CD8-positive, alpha-beta memory T cell (primary cell): ENCODE measurements at regions of chr4 and their contacts with region 1.

Region 1: GRCh38 chr4:1693129-1693896 is 9.2 kb upstream of the FAM53A start:
- DNase-seq: peak; percentile 63 to 86 (median 74)
- H3K4me3 ChIP-seq: no peak overlapping the region
- H3K4me3 Mint-ChIP-seq: no peak overlapping the region
- H3K27ac ChIP-seq: no peak overlapping the region
- H3K27ac Mint-ChIP-seq: peak overlapping the region in 6 of 8 donors; percentile 51 to 87 (median 78)
- H3K4me1 ChIP-seq: no peaks in the 10 kb centered on the region
- H3K4me1 Mint-ChIP-seq: peaks cover 0 to 5% (median 3%) of the 10 kb centered on the region in 3 donors
- H3K27me3 ChIP-seq: no peaks in the 10 kb centered on the region
- H3K27me3 Mint-ChIP-seq: no peaks in the 10 kb centered on the region

Region 2: GRCh38 chr4:1706358-1706757 is 13.0 kb after region 1 on chr4:
- CTCF ChIA-PET with region 1: interaction called, 92 read pairs
- POLR2A ChIA-PET with region 1: no interaction called
- DNase-seq: peak in 1 of 5 donors; percentile 29
- H3K4me3 ChIP-seq: no peak overlapping the region
- H3K4me3 Mint-ChIP-seq: no peak overlapping the region
- H3K27ac ChIP-seq: no peak overlapping the region
- H3K27ac Mint-ChIP-seq: no peak overlapping the region
- H3K4me1 ChIP-seq: peaks cover 26% of the 10 kb centered on the region
- H3K4me1 Mint-ChIP-seq: peaks cover 36 to 81% (median 64%) of the 10 kb centered on the region in 3 donors
- H3K27me3 ChIP-seq: no peaks in the 10 kb centered on the region
- H3K27me3 Mint-ChIP-seq: peaks cover 0 to 2% of the 10 kb centered on the region in 2 donors

Region 3: DNA sequence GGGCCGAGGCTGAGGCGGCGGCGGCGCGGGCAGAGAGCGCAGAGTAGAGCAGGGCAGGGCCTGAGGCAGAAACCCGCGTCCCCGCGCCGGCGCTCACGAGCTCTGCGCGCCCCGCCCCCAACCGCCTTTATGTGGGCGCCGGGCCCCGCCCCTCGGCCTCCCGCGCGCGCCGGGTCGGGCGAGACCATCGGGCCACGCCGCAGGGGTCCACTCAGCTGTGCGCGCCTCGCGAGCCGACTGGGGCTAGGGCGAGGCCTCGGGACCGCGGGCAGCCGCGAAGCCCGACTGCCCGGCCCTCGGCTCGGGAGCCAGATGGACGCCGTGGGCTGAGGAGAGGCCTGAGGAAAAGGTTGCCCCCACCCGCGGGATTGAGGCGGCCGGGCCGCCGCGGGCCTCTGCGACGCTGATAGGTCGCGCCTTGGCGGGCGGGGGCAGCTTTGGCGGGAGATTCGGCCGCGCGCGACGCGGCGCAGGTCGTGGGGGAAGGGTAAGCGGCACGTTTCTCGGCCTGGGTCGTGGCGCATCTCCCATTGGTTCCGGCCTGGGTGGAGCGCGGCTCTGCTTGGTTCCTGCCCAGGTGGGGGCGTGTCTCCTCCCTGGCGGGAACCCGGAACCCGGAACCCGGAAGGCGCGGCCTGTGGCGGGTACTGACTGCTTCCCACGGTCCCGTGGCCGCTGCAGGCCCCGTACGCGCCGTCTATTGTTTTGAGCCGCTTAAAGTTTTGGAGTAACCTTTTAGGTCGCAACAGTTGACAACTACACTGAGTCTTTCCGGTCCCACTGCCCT is 19.1 kb after region 1 on chr4 and contains the start of gene SLBP:
- CTCF ChIA-PET with region 1: interaction called, 341 read pairs
- POLR2A ChIA-PET with region 1: interaction called, 7 read pairs
- DNase-seq: peak; percentile 98 to 99 (median 98)
- H3K4me3 ChIP-seq: peak within 1 kb of the TSS; percentile 97
- H3K4me3 Mint-ChIP-seq: peak within 1 kb of the TSS; percentile 95 to 99 (median 96)
- H3K27ac ChIP-seq: peak within 1 kb of the TSS; percentile 90
- H3K27ac Mint-ChIP-seq: peak within 1 kb of the TSS; percentile 94 to 100 (median 98)
- H3K4me1 ChIP-seq: peaks cover 51% of the 10 kb centered on the region
- H3K4me1 Mint-ChIP-seq: peaks cover 56 to 73% (median 65%) of the 10 kb centered on the region in 3 donors
- H3K27me3 ChIP-seq: no peaks in the 10 kb centered on the region
- H3K27me3 Mint-ChIP-seq: peaks cover 0 to 2% of the 10 kb centered on the region in 2 donors
- total RNA-seq, gene SLBP: 163 to 164 TPM

Region 4: GRCh38 chr4:1721004-1721665 is 27.8 kb after region 1 on chr4 and contains the starts of genes TACC3 and TMEM129:
- CTCF ChIA-PET with region 1: interaction called, 341 read pairs
- POLR2A ChIA-PET with region 1: interaction called, 15 read pairs
- DNase-seq: peak; percentile 91 to 97 (median 95)
- H3K4me3 ChIP-seq: peak within 1 kb of the TSS; percentile 71
- H3K4me3 Mint-ChIP-seq: peak within 1 kb of the TSS; percentile 86 to 94 (median 87)
- H3K27ac ChIP-seq: peak within 1 kb of the TSS; percentile 81
- H3K27ac Mint-ChIP-seq: peak within 1 kb of the TSS; percentile 96 to 99 (median 98)
- H3K4me1 ChIP-seq: peaks cover 54% of the 10 kb centered on the region
- H3K4me1 Mint-ChIP-seq: peaks cover 41 to 67% (median 51%) of the 10 kb centered on the region in 3 donors
- H3K27me3 ChIP-seq: no peaks in the 10 kb centered on the region
- H3K27me3 Mint-ChIP-seq: no peaks in the 10 kb centered on the region
- total RNA-seq, gene TACC3: 124 to 129 TPM
- total RNA-seq, gene TMEM129: 27.6 to 30.6 TPM

Region 5: GRCh38 chr4:1726146-1726934 is 33.0 kb after region 1 on chr4:
- CTCF ChIA-PET with region 1: interaction called, 341 read pairs
- POLR2A ChIA-PET with region 1: interaction called, 15 read pairs
- DNase-seq: peak; percentile 76 to 90 (median 87)
- H3K4me3 ChIP-seq: no peak overlapping the region
- H3K4me3 Mint-ChIP-seq: peak overlapping the region; percentile 2 to 65 (median 15)
- H3K27ac ChIP-seq: no peak overlapping the region
- H3K27ac Mint-ChIP-seq: peak overlapping the region in 7 of 8 donors; percentile 26 to 86 (median 75)
- H3K4me1 ChIP-seq: peaks cover 65% of the 10 kb centered on the region
- H3K4me1 Mint-ChIP-seq: peaks cover 41 to 82% (median 61%) of the 10 kb centered on the region in 3 donors
- H3K27me3 ChIP-seq: no peaks in the 10 kb centered on the region
- H3K27me3 Mint-ChIP-seq: no peaks in the 10 kb centered on the region